Psoas muscle (tissue), 8 donors: ENCODE measurements at regions of chr9 and their contacts with region 1.

Region 1: DNA sequence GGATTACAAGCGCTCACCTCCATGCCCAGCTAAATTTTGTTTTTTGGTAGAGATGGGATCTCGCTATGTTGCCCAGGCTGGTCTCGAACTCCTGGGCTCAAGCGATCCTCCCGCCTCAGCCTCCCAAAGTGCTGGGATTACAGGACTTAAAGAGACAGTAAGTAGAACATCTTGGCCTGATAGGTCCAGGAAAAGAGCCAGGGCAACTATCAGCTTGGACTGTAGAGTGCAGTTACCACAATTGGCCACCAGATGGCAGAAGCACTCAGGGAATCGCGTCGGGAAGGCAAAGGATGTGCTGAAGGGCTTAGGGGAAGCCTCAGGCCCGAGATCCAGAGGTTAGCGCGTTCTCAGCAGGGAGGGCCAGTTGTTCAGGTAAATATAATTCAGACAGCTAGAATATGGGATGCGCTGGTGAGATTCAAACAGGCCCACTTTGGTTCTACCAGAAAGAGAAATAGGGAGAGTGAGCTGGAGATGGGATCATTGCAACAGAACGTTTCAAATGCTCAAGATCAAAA is 21.5 kb downstream of the C9orf57 start:
- DNase-seq: peak; percentile 64 to 77
- ATAC-seq: peak; percentile 90 to 95 (median 92)
- H3K4me3 ChIP-seq: no peak overlapping the region
- H3K27ac ChIP-seq: no peak overlapping the region
- H3K4me1 ChIP-seq: no peaks in the 10 kb centered on the region
- H3K27me3 ChIP-seq: no peaks in the 10 kb centered on the region
- CTCF ChIP-seq: peak; percentile 99

Region 2: DNA sequence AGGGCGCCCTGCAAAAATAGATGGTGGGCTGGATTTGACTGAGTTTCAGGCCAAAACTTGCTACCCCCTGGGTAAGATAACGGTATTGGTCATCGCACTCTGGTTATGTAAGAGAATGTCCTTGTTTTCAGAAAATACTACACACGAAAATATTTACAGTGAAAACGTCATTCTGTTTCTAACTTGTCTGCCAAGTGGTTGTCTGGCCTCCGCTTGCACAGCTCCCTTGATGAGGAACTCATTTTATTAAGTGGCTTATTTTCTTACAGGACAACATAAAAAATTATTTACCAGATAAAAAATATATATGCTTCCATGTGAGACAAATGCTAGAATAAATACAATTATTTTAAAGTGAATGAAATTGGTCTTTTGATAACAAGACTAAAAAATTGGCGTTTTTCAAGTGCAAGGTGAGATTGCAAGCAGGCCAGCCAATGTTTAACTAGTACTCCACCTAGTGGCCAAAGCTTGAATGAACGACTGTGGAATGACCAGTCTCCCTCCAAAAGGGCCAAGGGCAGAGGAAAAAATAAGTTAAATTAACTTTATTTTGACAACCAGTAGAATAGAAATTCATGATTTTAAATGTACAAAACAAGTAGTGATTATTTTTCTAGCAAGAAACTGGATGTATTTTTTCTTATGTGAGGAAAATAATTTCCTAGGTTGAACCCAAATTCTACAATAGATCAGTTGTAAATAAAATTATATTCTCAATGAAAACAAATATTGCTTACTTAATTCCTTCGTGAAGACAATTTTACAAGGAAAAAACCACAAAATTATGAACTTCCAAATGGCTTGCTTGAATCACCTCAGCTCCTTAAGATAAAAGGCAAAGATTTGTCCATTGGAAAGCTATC is 232.9 kb after region 1 on chr9:
- intact Hi-C with region 1: loop called (anchors 1 to 5 kb)
- DNase-seq: no peak
- ATAC-seq: peak in 3 of 4 donors; percentile 60 to 81 (median 62)
- H3K4me3 ChIP-seq: no peak overlapping the region
- H3K27ac ChIP-seq: no peak overlapping the region
- H3K4me1 ChIP-seq: no peaks in the 10 kb centered on the region
- H3K27me3 ChIP-seq: no peaks in the 10 kb centered on the region
- CTCF ChIP-seq: peak; percentile 90

Region 3: DNA sequence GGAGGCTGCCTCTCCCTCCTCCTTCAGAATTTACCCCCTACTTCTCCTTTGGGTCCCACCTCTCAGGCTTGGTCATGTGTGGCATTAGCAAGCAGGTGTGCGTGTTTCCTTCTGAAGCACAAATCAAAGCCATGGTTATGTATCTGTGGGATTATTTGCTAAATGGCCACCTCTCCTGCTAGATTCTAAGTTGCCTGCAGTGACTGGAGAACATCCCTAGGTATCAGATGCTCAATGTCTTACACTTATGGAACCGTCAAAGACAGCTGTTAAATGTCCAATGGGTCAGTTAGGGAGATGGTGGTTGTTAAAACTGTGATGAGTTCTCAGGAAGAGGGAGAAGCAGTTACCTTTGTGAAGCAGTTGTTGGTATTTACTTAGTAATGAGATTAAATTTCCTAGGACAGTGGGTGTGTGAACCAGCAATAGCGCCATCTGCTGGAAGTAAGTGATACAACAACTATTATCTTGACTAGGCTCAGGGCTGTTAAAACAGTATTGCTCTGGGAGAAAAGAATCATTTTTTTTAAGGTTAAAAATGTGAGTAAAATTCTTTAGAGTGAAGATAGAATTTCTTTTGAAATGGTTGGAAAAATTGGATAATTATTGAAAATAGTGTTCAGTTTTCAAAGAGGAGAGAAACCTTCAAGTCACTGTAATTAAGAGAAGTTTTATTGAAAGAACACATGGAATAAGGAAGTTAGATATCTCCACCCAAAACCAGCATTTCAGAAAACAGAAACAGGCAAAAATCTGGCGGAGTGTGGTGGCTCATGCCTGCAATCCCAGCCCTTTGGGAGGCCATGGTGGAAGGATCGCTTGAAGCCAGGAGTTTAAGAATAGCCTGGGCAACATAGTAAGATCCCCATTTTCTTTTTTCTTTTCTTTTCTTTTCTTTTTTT is 553.8 kb after region 1 on chr9:
- intact Hi-C with region 1: loop called in 1 of 2 experiments (anchors 5 kb)
- DNase-seq: no peak
- ATAC-seq: peak; percentile 82 to 96 (median 88)
- H3K4me3 ChIP-seq: no peak overlapping the region
- H3K27ac ChIP-seq: no peak overlapping the region
- H3K4me1 ChIP-seq: peaks cover 5% of the 10 kb centered on the region
- H3K27me3 ChIP-seq: no peaks in the 10 kb centered on the region
- CTCF ChIP-seq: peak; percentile 92

Region 4: GRCh38 chr9:72817413-72817812 is 778.5 kb after region 1 on chr9:
- intact Hi-C with region 1: loop called (anchors 5 to 10 kb)
- DNase-seq: no peak
- ATAC-seq: no peak
- H3K4me3 ChIP-seq: no peak overlapping the region
- H3K27ac ChIP-seq: no peak overlapping the region
- H3K4me1 ChIP-seq: no peaks in the 10 kb centered on the region
- H3K27me3 ChIP-seq: no peaks in the 10 kb centered on the region
- CTCF ChIP-seq: no peak

Region 5: DNA sequence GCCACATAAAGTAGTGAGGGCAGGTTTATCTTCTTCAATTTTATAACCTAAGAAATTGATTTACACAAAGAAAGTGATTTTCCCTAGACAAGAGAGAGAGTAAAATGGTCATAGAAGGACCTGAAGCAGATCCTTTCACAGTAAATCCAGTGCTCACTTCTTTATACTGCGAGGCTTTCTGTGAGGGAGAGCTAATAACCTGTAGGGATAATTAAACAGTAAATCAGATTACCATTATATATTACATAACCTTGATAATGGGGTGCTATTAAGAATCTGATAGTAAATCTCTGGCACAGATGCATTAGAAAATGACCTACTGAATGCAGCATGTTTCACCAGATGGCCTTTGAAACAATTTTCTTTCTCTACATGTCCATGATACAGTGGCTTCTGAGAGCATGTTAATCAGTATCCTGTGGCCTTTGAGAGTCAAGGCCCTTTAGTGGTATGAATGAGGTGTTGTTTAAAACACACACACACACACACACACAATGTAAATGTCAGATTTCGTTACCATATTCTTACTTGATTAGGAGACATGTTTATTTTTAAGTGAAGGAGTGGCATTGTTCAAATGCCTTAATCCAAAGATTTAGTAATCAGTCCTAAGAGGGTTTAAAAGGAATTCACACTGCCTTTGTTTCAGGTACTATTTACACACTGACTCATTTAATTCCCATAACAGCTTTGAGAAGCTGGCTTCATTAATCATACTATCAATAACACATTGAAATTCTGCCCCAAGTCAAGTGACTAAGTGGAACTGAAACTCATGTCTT is 789.2 kb after region 1 on chr9:
- intact Hi-C with region 1: loop called in 1 of 2 experiments (anchors 10 kb)
- DNase-seq: no peak
- ATAC-seq: no peak
- H3K4me3 ChIP-seq: no peak overlapping the region
- H3K27ac ChIP-seq: no peak overlapping the region
- H3K4me1 ChIP-seq: no peaks in the 10 kb centered on the region
- H3K27me3 ChIP-seq: no peaks in the 10 kb centered on the region
- CTCF ChIP-seq: no peak